ENCODE measurements at regions of chr3 and their contacts with region 1.

Region 1: GRCh38 chr3:4722103-4722502 is 229.0 kb downstream of the ITPR1 start:
- H3K4me3 Mint-ChIP-seq: no peak overlapping the region
- H3K27ac Mint-ChIP-seq: peak overlapping the region; percentile 63
- H3K4me1 Mint-ChIP-seq: peaks cover 19% of the 10 kb centered on the region
- H3K27me3 Mint-ChIP-seq: no peaks in the 10 kb centered on the region

Region 2: GRCh38 chr3:4776980-4777581 is 55.0 kb after region 1 on chr3:
- intact Hi-C with region 1: loop called (anchors 10 kb)
- H3K4me3 Mint-ChIP-seq: no peak overlapping the region
- H3K27ac Mint-ChIP-seq: no peak overlapping the region
- H3K4me1 Mint-ChIP-seq: peaks cover 13% of the 10 kb centered on the region
- H3K27me3 Mint-ChIP-seq: no peaks in the 10 kb centered on the region